GM12878 (cell line): ENCODE measurements at regions of chr13 and their contacts with region 1.

Region 1: GRCh38 chr13:97855570-97856303 is 97.7 kb upstream of the IPO5 start:
- DNase-seq: peak; percentile 13
- ATAC-seq: peak; percentile 93
- H3K4me3 ChIP-seq: no peak overlapping the region
- H3K27ac ChIP-seq: no peak overlapping the region
- H3K4me1 ChIP-seq: peaks cover 13% of the 10 kb centered on the region
- H3K27me3 ChIP-seq: 0 out of 4 replicates have a peak, but pooled peaks cover 0 to 2% of the 10 kb centered on the region in 2 experiments
- CTCF ChIP-seq: peak; percentile 76 to 82 (median 77)
- EP300 ChIP-seq: no peak
- POLR2A ChIP-seq: no peak
- RAD21 ChIP-seq: peak; percentile 72

Region 2: GRCh38 chr13:97904059-97904458 is 48.3 kb after region 1 on chr13:
- CTCF ChIA-PET with region 1: interaction called, 3 read pairs
- POLR2A ChIA-PET with region 1: no interaction called
- RAD21 ChIA-PET with region 1: no interaction called
- SMC1A ChIA-PET with region 1: no interaction called
- in situ Hi-C with region 1: loop called (anchors 5 kb)
- intact Hi-C with region 1: no loop called
- DNase-seq: no peak
- ATAC-seq: no peak
- H3K4me3 ChIP-seq: no peak overlapping the region
- H3K27ac ChIP-seq: no peak overlapping the region
- H3K4me1 ChIP-seq: no peaks in the 10 kb centered on the region
- H3K27me3 ChIP-seq: no peaks in the 10 kb centered on the region; a peak in 1 of 4 replicates
- CTCF ChIP-seq: no peak
- EP300 ChIP-seq: no peak
- POLR2A ChIP-seq: no peak
- RAD21 ChIP-seq: no peak

Region 3: GRCh38 chr13:97975848-97976609 is 120.3 kb after region 1 on chr13:
- CTCF ChIA-PET with region 1: interaction called, 4 read pairs
- POLR2A ChIA-PET with region 1: no interaction called
- RAD21 ChIA-PET with region 1: no interaction called
- SMC1A ChIA-PET with region 1: no interaction called
- in situ Hi-C with region 1: no loop called
- intact Hi-C with region 1: loop called (anchors 10 kb)
- DNase-seq: no peak
- ATAC-seq: peak; percentile 94
- H3K4me3 ChIP-seq: peak overlapping the region; percentile 81
- H3K27ac ChIP-seq: peak overlapping the region; percentile 82
- H3K4me1 ChIP-seq: peaks cover 3% of the 10 kb centered on the region; the same call in 1 of the 2 replicates
- H3K27me3 ChIP-seq: no peaks in the 10 kb centered on the region
- CTCF ChIP-seq: no peak
- EP300 ChIP-seq: no peak
- POLR2A ChIP-seq: peak; percentile 85
- RAD21 ChIP-seq: no peak

Region 4: DNA sequence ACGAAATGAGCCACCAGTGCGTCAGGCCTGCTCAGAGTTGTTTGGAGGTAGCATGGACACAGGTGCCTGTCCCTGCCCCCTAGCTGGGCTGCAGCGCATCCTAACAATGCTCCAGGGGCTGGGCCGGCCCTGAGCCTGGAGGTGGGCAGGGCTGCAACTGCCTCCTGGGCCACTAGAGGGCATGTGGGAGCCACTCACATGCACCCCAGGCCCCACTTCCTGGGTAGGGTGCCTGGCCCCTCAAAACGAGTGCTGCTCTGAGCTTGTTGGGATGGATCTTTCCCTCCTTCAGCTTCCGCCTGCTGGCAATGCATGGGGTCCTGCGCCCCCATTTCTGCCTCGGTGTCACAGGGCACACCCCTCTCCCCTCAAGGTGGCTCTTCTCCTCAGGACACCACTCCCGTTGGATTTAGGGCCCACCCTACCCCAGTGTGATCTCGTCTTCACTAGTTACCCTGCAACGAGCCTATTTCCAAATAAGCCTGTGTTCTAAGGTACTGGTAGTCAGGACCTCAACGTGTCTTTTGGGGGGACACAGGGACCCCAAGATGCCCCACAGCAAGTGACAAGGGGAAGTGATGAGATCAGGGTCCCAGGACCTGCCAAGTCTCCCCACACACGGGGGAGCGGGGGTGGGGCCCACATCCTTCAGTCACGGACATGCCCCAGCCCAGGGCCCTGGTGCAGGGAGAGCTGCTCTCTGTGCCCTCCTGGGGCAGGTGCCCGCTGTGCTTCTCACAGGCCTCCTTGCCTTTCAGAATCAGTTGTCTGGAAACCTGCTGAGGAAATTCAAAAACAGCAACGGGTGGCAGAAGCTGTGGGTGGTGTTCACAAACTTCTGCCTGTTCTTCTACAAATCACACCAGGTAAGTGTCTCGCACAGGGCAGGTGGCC is 589.9 kb after region 1 on chr13:
- CTCF ChIA-PET with region 1: interaction called, 14 read pairs
- POLR2A ChIA-PET with region 1: no interaction called
- RAD21 ChIA-PET with region 1: no interaction called
- SMC1A ChIA-PET with region 1: no interaction called
- in situ Hi-C with region 1: loop called (anchors 10 kb)
- intact Hi-C with region 1: no loop called
- DNase-seq: peak; percentile 17
- ATAC-seq: peak; percentile 97
- H3K4me3 ChIP-seq: no peak overlapping the region
- H3K27ac ChIP-seq: peak overlapping the region; percentile 53
- H3K4me1 ChIP-seq: peaks cover 6% of the 10 kb centered on the region
- H3K27me3 ChIP-seq: no peaks in the 10 kb centered on the region
- CTCF ChIP-seq: peak; percentile 90 to 100 (median 98); a peak in 5 of 6 replicates
- EP300 ChIP-seq: no peak
- POLR2A ChIP-seq: no peak; the same call in 1 of the 2 replicates
- RAD21 ChIP-seq: peak; percentile 93

Region 5: GRCh38 chr13:98842864-98843481 is 987.2 kb after region 1 on chr13:
- CTCF ChIA-PET with region 1: interaction called, 23 read pairs
- POLR2A ChIA-PET with region 1: no interaction called
- RAD21 ChIA-PET with region 1: interaction called, 16 read pairs
- SMC1A ChIA-PET with region 1: interaction called, 5 read pairs
- in situ Hi-C with region 1: loop called (anchors 5 kb)
- intact Hi-C with region 1: loop called (anchors 2 kb)
- DNase-seq: peak; percentile 38
- ATAC-seq: peak; percentile 93
- H3K4me3 ChIP-seq: no peak overlapping the region
- H3K27ac ChIP-seq: no peak overlapping the region
- H3K4me1 ChIP-seq: no peaks in the 10 kb centered on the region
- H3K27me3 ChIP-seq: no peaks in the 10 kb centered on the region
- CTCF ChIP-seq: peak; percentile 86 to 95 (median 89)
- EP300 ChIP-seq: no peak
- POLR2A ChIP-seq: no peak
- RAD21 ChIP-seq: peak; percentile 83